ENCODE measurements at regions of chr14 and their contacts with region 1.

Region 1: GRCh38 chr14:21014761-21015190 is 10.1 kb downstream of the NDRG2 start:
- DNase-seq: no peak
- H3K4me3 ChIP-seq: no peak overlapping the region
- H3K27me3 ChIP-seq: peaks cover 3% of the 10 kb centered on the region; the same call in 1 of the 2 replicates
- CTCF ChIP-seq: peak; percentile 88

Region 2: DNA sequence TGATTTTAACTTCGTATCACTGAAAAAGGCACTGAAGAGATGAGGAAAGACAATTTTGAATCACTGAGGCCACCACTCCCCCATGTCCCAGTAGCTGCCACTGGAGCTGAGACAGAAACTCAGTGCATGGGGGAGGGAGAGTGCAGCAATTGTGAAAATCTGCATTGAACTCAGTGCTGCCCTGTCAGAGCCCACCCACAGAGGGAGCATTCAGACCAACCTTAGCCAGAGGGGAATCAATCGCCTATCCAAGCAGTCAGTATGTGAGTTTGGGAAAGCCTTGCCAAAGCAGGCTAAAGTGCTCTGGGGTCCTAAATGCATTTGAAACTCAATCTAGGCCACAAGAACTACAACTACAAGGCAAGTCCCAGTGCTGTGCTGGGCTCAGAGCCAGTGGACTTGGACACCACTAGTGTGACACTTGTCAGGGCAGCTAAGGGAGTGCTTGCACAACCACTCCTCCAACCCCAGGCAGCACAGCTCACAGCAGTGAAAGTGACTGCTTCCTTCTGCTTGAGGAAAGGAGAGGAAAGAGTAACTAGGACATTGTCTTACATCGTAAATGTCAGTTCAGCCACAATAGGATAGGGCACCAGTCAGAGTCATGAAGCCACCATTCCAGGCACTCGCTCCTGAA is 110.3 kb before region 1 on chr14:
- CTCF ChIA-PET with region 1: no interaction called
- POLR2A ChIA-PET with region 1: no interaction called
- DNase-seq: no peak
- H3K4me3 ChIP-seq: no peak overlapping the region
- H3K27me3 ChIP-seq: no peaks in the 10 kb centered on the region
- CTCF ChIP-seq: no peak

Region 3: GRCh38 chr14:20970983-20971704 is 43.6 kb before region 1 on chr14:
- CTCF ChIA-PET with region 1: interaction called, 23 read pairs
- POLR2A ChIA-PET with region 1: no interaction called
- DNase-seq: no peak
- H3K4me3 ChIP-seq: peak overlapping the region; percentile 44
- H3K27me3 ChIP-seq: peaks cover 2% of the 10 kb centered on the region; the same call in 1 of the 2 replicates
- CTCF ChIP-seq: peak; percentile 100

Region 4: DNA sequence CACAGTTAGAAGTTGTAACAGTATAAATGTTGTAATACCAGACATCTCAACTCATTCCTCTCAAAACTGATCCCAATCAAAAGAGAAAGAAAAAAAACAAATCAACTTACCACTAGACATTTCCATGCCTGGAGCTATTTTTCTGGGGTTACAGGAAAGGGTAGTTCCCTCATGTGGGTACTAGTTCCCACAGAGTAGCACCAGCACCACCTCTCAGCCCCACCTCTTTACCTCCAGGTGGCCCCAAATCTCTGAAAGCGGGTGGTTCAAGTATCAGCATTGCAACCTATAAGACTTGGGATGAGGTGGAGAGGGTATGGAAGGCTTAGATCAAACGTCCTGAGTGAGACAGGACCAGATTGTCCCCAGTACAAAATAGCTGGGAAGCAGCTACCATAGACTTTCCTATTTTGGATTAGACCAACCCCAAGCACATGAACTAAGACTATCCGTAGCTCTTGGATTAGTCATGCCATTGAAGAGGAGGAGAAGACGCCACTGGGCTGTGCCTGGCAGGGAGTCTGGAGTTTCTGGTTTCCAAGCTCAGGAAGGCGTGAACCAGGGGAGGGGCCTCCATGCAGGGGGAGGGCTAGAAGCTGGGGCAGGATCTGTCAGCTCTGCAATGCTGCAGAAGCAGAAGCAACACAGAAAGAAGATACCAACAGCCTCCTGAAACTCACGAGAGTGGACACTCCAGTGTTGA is 16.0 kb before region 1 on chr14 and contains the start of gene SLC39A2:
- CTCF ChIA-PET with region 1: interaction called, 82 read pairs
- POLR2A ChIA-PET with region 1: interaction called, 3 read pairs
- DNase-seq: peak; percentile 37
- H3K4me3 ChIP-seq: no peak within 1 kb of the TSS
- H3K27me3 ChIP-seq: no peaks in the 10 kb centered on the region
- CTCF ChIP-seq: no peak
- polyA plus RNA-seq, gene SLC39A2: not detected in 2 replicates

Region 5: DNA sequence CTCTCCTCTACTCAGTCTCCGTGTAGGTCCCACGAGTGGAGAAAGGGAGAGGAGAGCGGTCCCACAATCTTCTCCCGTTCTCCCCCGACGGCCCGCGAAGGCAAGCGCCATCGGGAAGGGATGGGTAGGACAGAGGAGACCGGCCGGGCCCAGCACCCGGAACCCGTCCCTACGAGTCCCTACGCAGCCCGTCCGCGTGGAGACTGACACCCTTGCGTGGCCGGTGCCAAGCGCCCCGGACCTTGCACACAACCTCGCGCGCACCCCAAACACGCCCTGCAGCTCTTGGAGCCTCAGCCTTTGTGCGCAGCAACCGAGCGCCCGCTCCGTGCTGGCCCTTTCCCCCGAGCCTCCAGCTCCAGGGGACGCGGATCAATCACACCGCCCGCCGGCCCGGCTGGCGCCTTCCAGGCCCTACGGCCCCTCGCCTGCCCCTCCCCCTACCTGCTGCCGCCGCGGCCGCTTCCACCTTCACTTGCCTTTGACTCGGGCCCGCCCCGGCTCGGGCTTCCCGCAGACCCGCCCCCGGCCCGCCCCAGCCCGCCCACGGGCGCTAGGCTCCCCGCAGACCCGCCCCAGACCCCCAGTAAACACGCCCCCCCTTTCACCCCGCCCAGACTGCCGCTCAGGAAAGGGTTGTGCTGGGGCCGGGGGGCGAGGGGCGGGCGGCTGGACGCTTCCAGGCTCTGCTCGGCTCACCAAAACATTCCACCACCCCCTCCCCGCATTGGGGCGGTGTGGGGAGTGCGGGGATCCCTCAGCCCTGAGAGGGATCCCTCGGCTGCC is 10.0 kb after region 1 on chr14 and contains the start of gene NDRG2:
- CTCF ChIA-PET with region 1: interaction called, 16 read pairs
- POLR2A ChIA-PET with region 1: no interaction called
- DNase-seq: no peak
- H3K4me3 ChIP-seq: peak within 1 kb of the TSS; percentile 36
- H3K27me3 ChIP-seq: peaks cover 42% of the 10 kb centered on the region
- CTCF ChIP-seq: no peak
- polyA plus RNA-seq, gene NDRG2: 0.83 and 1.1 TPM in 2 replicates

Region 6: GRCh38 chr14:21039585-21040369 is 25.0 kb after region 1 on chr14:
- CTCF ChIA-PET with region 1: interaction called, 202 read pairs
- POLR2A ChIA-PET with region 1: interaction called, 3 read pairs
- DNase-seq: no peak
- H3K4me3 ChIP-seq: no peak overlapping the region
- H3K27me3 ChIP-seq: peaks cover 6% of the 10 kb centered on the region
- CTCF ChIP-seq: peak; percentile 59

Region 7: GRCh38 chr14:21057803-21058675 is 43.3 kb after region 1 on chr14 and contains the start of gene RNASE8:
- CTCF ChIA-PET with region 1: interaction called, 18 read pairs
- POLR2A ChIA-PET with region 1: no interaction called
- DNase-seq: no peak
- H3K4me3 ChIP-seq: no peak within 1 kb of the TSS
- H3K27me3 ChIP-seq: no peaks in the 10 kb centered on the region
- CTCF ChIP-seq: peak; percentile 39
- polyA plus RNA-seq, gene RNASE8: not detected in 2 replicates

Region 8: GRCh38 chr14:21092273-21093011 is 77.7 kb after region 1 on chr14:
- CTCF ChIA-PET with region 1: interaction called, 202 read pairs
- POLR2A ChIA-PET with region 1: no interaction called
- DNase-seq: no peak
- H3K4me3 ChIP-seq: no peak overlapping the region
- H3K27me3 ChIP-seq: no peaks in the 10 kb centered on the region
- CTCF ChIP-seq: peak; percentile 100

Measured in BJ (cell line).